PC-9 (cell line): ENCODE measurements at regions of chr17 and their contacts with region 1.

Region 1: DNA sequence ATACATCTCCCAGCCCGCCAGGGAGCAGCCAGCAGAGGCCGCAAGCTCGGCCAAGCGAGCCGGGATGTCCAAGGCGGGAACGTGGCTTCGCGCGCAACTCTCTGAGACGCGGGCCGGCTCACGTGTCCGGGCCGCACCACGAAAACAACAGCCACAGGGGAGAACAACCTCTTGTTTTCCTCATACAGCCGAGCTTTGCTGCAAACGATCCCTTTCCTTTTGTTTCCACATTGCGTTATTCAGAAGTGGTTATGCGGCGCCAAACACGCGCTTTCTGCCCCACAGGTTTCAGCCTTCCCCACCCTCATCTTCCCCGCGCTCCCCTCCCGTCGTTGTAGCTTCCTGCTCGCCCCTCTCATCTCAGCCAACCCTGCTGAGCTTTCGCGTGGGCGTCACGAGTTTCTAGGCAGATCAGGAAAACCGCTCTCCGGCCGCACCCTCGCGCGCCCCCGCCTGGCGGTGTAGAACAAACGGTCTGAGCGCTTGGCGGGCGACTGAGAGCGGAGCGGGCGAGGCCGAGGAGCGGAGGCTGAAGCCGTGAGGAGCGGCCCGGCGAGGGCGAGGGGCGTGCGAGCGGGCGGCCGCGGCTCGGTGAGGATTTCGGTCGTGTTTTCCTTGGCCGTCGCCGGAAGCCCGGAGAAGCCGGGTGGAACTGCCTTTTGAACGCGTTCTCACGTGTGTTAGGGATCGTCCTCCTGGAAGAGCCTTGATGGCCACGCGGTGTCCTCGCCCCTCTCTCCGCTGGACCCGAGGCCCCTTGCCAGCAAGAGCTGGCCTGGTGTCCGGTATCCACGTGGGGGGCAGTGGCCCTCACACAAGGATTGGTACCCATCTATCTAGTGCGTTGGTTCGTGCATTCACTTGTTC is 6.6 kb upstream of the SMARCD2 start:
- DNase-seq: peak; percentile 85 to 96
- H3K4me3 ChIP-seq: peak overlapping the region; percentile 44; the same call in 1 of the 2 replicates
- H3K27ac ChIP-seq: peak overlapping the region; percentile 67
- H3K4me1 ChIP-seq: no peaks in the 10 kb centered on the region; the same call in 1 of the 2 replicates
- H3K27me3 ChIP-seq: no peaks in the 10 kb centered on the region
- CTCF ChIP-seq: peak; percentile 80

Region 2: DNA sequence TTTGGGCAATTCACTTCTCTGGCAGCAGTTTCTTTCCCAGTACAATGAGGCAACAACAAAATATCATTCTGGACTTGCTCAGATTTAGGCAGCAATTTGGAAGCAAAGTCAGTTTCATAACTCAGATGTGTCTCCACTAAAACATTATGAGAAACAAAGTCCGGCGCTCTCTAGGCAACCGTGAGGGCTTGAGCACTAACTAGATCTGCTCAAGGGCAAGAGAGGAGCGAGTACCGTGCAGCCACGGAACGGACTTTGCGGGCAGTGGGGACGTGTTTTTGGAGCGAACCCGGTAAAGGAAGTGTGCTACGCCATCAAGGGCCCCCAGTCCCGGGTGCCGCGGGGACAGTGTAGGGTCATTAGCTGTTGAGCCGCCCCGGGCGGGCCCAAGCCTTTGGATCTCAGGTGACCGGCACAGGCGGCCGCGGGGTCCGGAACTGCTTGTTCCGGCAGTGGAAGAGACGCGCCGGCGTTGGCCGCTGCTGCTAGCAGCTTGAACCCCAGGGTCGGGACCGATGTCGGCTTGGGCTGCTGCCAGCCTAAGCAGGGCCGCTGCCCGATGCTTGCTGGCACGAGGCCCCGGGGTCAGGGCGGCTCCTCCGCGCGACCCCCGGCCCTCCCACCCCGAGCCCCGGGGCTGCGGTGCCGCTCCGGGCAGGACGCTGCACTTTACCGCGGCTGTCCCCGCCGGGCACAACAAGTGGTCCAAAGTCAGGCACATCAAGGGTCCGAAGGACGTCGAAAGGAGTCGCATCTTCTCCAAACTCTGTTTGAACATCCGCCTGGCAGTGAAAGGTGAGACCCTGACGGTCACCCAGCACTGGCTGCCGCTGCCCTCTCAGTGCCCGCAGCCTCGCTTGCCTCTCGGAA is 248.3 kb before region 1 on chr17 and contains the start of gene TACO1:
- CTCF ChIA-PET with region 1: no interaction called
- POLR2A ChIA-PET with region 1: no interaction called
- intact Hi-C with region 1: no loop called
- DNase-seq: peak; percentile 61 to 79
- H3K4me3 ChIP-seq: peak within 1 kb of the TSS; percentile 89
- H3K27ac ChIP-seq: no peak within 1 kb of the TSS
- H3K4me1 ChIP-seq: peaks cover 11% of the 10 kb centered on the region; the same call in 1 of the 2 replicates
- H3K27me3 ChIP-seq: no peaks in the 10 kb centered on the region
- CTCF ChIP-seq: no peak
- total RNA-seq, gene TACO1: 25.0 and 27.1 TPM in 2 replicates

Region 3: GRCh38 chr17:63665527-63666214 is 183.4 kb before region 1 on chr17:
- CTCF ChIA-PET with region 1: interaction called, 12 read pairs
- POLR2A ChIA-PET with region 1: no interaction called
- intact Hi-C with region 1: no loop called
- DNase-seq: no peak
- H3K4me3 ChIP-seq: no peak overlapping the region
- H3K27ac ChIP-seq: no peak overlapping the region
- H3K4me1 ChIP-seq: no peaks in the 10 kb centered on the region
- H3K27me3 ChIP-seq: no peaks in the 10 kb centered on the region
- CTCF ChIP-seq: no peak

Region 4: GRCh38 chr17:63827002-63827771 is 21.9 kb before region 1 on chr17 and contains the starts of genes FTSJ3 and PSMC5:
- CTCF ChIA-PET with region 1: interaction called, 10 read pairs
- POLR2A ChIA-PET with region 1: interaction called, 3 read pairs
- intact Hi-C with region 1: no loop called
- DNase-seq: peak; percentile 88 to 90
- H3K4me3 ChIP-seq: peak within 1 kb of the TSS; percentile 70
- H3K27ac ChIP-seq: peak within 1 kb of the TSS; percentile 89
- H3K4me1 ChIP-seq: peaks cover 18% of the 10 kb centered on the region
- H3K27me3 ChIP-seq: no peaks in the 10 kb centered on the region
- CTCF ChIP-seq: peak; percentile 38; the same call in 1 of the 2 replicates
- total RNA-seq, gene FTSJ3: 36.9 and 44.0 TPM in 2 replicates
- total RNA-seq, gene PSMC5: 128 and 150 TPM in 2 replicates

Region 5: DNA sequence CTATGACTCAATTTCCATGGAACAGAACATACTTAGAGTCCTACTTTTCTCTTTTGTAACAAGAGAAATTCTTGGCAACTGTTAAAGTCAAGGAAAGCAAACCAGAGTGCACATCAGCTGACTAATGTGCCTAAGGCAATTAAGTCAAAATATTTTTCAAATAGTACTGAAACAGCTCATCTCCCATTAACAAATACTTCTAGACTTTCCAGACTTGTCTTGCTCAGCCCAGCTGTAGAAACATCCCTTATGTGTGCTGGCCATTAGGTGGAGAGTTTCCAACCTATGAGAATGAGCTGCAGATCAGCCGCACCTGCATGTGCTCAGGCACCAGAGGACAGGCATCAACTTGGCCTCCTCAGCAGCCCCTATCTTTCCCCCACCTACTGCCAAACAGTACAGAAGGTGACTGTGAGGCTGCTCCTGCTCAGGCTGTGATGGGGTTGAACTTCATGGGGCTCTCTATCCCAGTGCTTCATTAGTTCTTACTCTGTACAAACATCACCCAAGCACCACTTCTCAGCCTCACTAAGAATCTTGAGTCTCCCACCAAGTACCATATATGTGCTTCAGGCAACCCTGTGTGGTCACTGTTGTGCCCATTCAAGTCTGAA is 381.8 kb after region 1 on chr17:
- CTCF ChIA-PET with region 1: interaction called, 15 read pairs
- POLR2A ChIA-PET with region 1: no interaction called
- intact Hi-C with region 1: no loop called
- DNase-seq: peak; percentile 22 to 87
- H3K4me3 ChIP-seq: no peak overlapping the region
- H3K27ac ChIP-seq: no peak overlapping the region
- H3K4me1 ChIP-seq: peaks cover 18% of the 10 kb centered on the region
- H3K27me3 ChIP-seq: no peaks in the 10 kb centered on the region
- CTCF ChIP-seq: no peak